CD4-positive, alpha-beta T cell (primary cell): ENCODE measurements at regions of chr1 and their contacts with region 1.

Region 1: DNA sequence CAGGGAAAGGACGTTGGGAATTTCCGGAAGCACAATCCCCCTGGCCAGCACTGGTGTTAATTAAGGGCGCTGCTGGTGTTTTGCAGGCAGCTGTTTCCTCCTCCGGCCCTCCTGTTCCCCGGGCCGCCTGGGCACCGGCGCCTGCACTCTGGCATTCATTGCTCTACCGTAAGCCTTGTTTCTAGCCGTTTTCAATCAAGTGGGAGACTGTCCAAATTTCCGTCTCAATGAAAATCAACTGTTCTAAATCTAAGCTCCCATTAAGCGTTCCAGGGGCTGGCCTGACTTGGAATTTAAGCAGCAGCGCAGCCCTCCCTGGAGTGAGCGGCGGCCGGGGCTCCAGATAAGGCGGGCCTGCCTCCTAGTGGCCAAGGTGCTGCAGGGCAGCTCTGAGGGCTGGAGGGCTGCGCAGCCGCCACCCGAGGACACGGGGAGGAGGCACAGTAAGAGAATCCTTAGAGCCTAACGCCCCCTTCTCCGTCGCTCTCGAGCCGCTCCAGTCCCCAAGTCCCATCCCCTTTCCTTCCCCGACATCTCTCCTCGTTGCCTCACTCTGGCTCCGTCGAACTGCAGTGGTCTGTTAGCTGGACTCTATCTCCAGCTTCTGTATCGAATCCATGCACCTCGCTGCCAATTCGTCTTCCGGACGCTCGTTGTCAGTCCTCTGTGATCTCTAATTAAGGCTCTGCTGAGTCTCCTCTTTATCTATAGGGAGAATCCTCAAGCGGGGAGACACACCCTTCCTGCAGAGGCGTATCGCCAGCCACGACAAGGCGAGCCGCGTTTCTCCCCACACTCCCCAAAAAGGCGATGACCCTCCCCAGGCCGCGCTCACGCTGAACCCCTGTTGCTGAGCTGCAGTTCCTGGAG is 57.8 kb upstream of the LRRC8D start:
- DNase-seq: peak; percentile 80 to 92 (median 85)
- ATAC-seq: peak; percentile 99
- H3K4me3 ChIP-seq: peak overlapping the region; percentile 61
- H3K4me3 Mint-ChIP-seq: peak overlapping the region; percentile 86
- H3K27ac ChIP-seq: peak overlapping the region in 1 of 2 donors; percentile 42
- H3K27ac Mint-ChIP-seq: peak overlapping the region; percentile 78
- H3K4me1 ChIP-seq: peaks cover 44% of the 10 kb centered on the region
- H3K4me1 Mint-ChIP-seq: peaks cover 51% of the 10 kb centered on the region
- H3K27me3 ChIP-seq: no peaks in the 10 kb centered on the region
- H3K27me3 Mint-ChIP-seq: no peaks in the 10 kb centered on the region
- CTCF ChIP-seq: peak; percentile 94

Region 2: DNA sequence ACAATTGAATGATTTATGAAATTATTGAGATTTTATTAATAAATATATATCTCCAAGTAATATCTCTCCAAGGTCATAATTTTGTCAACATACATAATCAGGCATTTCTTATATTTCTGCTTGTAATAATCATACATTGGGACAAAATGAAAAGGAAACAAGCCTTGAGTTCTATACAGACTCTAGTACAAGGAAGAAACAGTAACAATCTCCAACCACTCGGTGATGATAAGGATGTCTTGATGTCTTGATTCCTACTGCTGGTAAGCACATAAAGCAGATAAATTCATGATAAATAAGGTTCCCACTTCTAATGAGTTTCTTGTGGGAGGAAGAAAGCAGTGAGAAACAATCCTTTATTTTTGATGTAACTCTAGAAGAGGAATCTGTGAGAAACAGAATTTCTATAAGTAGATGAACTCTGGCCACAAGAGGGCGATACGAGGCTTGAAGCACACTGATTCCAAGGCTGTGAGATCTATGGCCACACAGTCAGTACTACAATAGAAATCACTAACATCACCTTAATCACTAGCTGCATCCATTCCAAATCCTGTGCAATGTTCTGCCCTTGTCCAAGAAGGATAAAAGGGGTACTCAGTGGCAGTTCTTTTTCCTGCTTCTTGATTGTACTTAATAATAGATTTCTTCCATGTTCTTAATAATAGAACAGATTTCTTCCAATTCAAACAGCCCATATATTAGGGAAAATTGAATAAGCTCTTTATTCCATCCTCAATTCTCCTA is 279.8 kb before region 1 on chr1:
- CTCF ChIA-PET with region 1: interaction called, 38 read pairs
- POLR2A ChIA-PET with region 1: interaction called, 22 read pairs
- intact Hi-C with region 1: loop called (anchors 1 to 2 kb)
- DNase-seq: peak; percentile 57 to 88 (median 72)
- ATAC-seq: peak; percentile 95
- H3K4me3 ChIP-seq: no peak overlapping the region
- H3K4me3 Mint-ChIP-seq: no peak overlapping the region
- H3K27ac ChIP-seq: no peak overlapping the region
- H3K27ac Mint-ChIP-seq: no peak overlapping the region
- H3K4me1 ChIP-seq: no peaks in the 10 kb centered on the region
- H3K4me1 Mint-ChIP-seq: peaks cover 14% of the 10 kb centered on the region
- H3K27me3 ChIP-seq: no peaks in the 10 kb centered on the region
- H3K27me3 Mint-ChIP-seq: no peaks in the 10 kb centered on the region
- CTCF ChIP-seq: peak; percentile 88

Region 3: GRCh38 chr1:89581859-89582258 is 181.2 kb before region 1 on chr1:
- CTCF ChIA-PET with region 1: interaction called, 5 read pairs
- POLR2A ChIA-PET with region 1: interaction called, 20 read pairs
- intact Hi-C with region 1: loop called (anchors 1 to 2 kb)
- DNase-seq: no peak
- ATAC-seq: no peak
- H3K4me3 ChIP-seq: no peak overlapping the region
- H3K4me3 Mint-ChIP-seq: no peak overlapping the region
- H3K27ac ChIP-seq: no peak overlapping the region
- H3K27ac Mint-ChIP-seq: no peak overlapping the region
- H3K4me1 ChIP-seq: no peaks in the 10 kb centered on the region
- H3K4me1 Mint-ChIP-seq: peaks cover 32% of the 10 kb centered on the region
- H3K27me3 ChIP-seq: no peaks in the 10 kb centered on the region
- H3K27me3 Mint-ChIP-seq: no peaks in the 10 kb centered on the region
- CTCF ChIP-seq: no peak

Region 4: DNA sequence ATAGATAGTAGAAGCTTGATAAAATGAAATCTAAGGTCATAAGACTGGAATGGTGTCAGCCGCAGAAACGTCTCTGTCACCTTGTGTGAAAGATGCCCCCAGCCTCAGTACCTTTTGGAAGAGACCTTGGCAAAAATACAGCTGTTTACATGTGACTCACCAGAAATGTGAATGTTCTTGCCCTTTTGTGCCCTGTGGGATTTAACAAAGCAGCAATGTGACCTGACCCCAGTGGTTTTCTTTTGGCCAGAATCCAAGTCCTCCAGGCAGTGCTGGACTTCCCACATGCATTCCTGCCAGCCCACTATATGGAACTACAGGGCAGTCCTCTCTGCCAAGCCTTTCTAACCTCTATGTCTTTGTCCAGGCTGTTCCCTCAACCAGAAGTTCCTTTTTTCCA is 157.3 kb before region 1 on chr1:
- CTCF ChIA-PET with region 1: interaction called, 35 read pairs
- POLR2A ChIA-PET with region 1: interaction called, 88 read pairs
- intact Hi-C with region 1: loop called in 1 of 2 experiments (anchors 2 kb)
- DNase-seq: no peak
- ATAC-seq: no peak
- H3K4me3 ChIP-seq: no peak overlapping the region
- H3K4me3 Mint-ChIP-seq: peak overlapping the region; percentile 56
- H3K27ac ChIP-seq: peak overlapping the region; percentile 80 to 91
- H3K27ac Mint-ChIP-seq: peak overlapping the region; percentile 99
- H3K4me1 ChIP-seq: peaks cover 81% of the 10 kb centered on the region
- H3K4me1 Mint-ChIP-seq: peaks cover 94% of the 10 kb centered on the region
- H3K27me3 ChIP-seq: no peaks in the 10 kb centered on the region
- H3K27me3 Mint-ChIP-seq: no peaks in the 10 kb centered on the region
- CTCF ChIP-seq: no peak

Region 5: DNA sequence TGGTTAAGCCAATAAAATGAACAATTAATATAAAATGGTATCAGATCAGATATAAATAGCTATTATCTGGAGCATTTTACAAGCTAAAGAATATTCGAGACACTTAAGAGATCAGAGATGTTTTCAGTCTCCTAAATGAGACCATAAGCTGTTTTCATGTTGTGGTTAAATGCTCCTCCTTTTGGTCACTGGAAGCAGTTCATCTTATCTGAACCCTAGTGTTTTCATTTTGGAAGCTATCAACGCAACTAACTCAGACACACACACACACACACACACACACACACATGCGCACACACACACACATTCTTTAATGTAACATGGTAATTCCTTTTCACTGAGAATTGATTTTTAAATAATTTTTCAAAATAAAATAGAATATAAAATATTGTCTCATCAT is 140.1 kb before region 1 on chr1:
- CTCF ChIA-PET with region 1: interaction called, 133 read pairs
- POLR2A ChIA-PET with region 1: interaction called, 17 read pairs
- intact Hi-C with region 1: no loop called
- DNase-seq: peak in 4 of 14 experiments; percentile 25 to 78 (median 69)
- ATAC-seq: peak; percentile 65
- H3K4me3 ChIP-seq: no peak overlapping the region
- H3K4me3 Mint-ChIP-seq: peak overlapping the region; percentile 63
- H3K27ac ChIP-seq: no peak overlapping the region
- H3K27ac Mint-ChIP-seq: peak overlapping the region; percentile 72
- H3K4me1 ChIP-seq: peaks cover 12% of the 10 kb centered on the region
- H3K4me1 Mint-ChIP-seq: peaks cover 62% of the 10 kb centered on the region
- H3K27me3 ChIP-seq: no peaks in the 10 kb centered on the region
- H3K27me3 Mint-ChIP-seq: no peaks in the 10 kb centered on the region
- CTCF ChIP-seq: no peak

Region 6: DNA sequence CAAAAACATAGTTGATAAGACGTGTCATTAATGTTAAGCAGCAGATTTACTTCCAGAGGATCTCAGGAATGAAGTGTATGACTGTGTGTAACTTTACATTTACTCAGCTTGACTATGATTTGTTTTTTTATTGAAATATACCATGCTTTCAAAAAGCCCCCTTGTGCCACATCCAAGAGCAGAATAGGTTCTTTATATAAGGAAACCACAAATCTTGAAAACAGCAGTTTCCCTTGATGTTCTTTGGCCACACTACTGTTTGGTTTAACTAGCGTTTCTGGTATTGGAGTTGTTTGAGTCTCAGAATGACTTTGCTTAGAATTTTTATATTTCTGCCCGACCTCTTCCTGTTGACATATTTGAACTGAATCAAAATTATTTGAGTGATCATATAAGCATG is 105.1 kb before region 1 on chr1:
- CTCF ChIA-PET with region 1: interaction called, 17 read pairs
- POLR2A ChIA-PET with region 1: interaction called, 17 read pairs
- intact Hi-C with region 1: no loop called
- DNase-seq: peak in 4 of 14 experiments; percentile 16 to 86 (median 84)
- ATAC-seq: peak; percentile 76
- H3K4me3 ChIP-seq: peak overlapping the region; percentile 11
- H3K4me3 Mint-ChIP-seq: peak overlapping the region; percentile 70
- H3K27ac ChIP-seq: peak overlapping the region; percentile 62 to 63
- H3K27ac Mint-ChIP-seq: peak overlapping the region; percentile 88
- H3K4me1 ChIP-seq: peaks cover 48% of the 10 kb centered on the region
- H3K4me1 Mint-ChIP-seq: peaks cover 96% of the 10 kb centered on the region
- H3K27me3 ChIP-seq: no peaks in the 10 kb centered on the region
- H3K27me3 Mint-ChIP-seq: no peaks in the 10 kb centered on the region
- CTCF ChIP-seq: no peak

Region 7: DNA sequence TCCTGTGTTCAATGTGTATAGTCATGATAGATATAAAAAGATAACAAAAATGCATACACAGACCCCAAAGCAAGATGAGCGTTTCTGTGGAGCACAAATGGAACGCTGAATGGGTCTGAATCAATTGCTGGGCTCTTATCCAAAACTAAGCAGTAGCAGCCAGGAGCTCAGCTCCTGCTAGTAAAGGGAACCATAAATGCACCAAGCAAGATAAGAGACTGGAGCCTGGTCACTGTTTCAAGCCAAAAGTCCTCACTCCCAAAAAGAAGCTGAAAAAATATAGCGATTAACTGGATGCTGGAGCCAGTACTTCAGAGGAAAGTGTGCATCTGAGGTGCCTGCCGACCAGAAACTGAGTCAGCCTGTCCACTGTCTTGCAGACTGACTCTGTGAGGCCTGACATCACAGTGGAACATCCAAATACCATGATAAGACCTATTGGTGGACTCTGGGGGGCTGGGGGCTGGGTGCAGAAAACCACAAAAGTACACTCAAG is 61.2 kb before region 1 on chr1:
- CTCF ChIA-PET with region 1: interaction called, 12 read pairs
- POLR2A ChIA-PET with region 1: interaction called, 3 read pairs
- intact Hi-C with region 1: loop called in 1 of 2 experiments (anchors 5 kb)
- DNase-seq: no peak
- ATAC-seq: no peak
- H3K4me3 ChIP-seq: no peak overlapping the region
- H3K4me3 Mint-ChIP-seq: no peak overlapping the region
- H3K27ac ChIP-seq: no peak overlapping the region
- H3K27ac Mint-ChIP-seq: peak overlapping the region; percentile 35
- H3K4me1 ChIP-seq: peaks cover 26% of the 10 kb centered on the region
- H3K4me1 Mint-ChIP-seq: peaks cover 76% of the 10 kb centered on the region
- H3K27me3 ChIP-seq: no peaks in the 10 kb centered on the region
- H3K27me3 Mint-ChIP-seq: no peaks in the 10 kb centered on the region
- CTCF ChIP-seq: no peak